Dendritic cell treated with granulocyte-macrophage colony-stimulating factor and Interleukin-4, amounts not matched to agents 40 ng/mL and 50 ng/mL, for 4 days (primary cell): ENCODE measurements at regions of chr5 and their contacts with region 1.

Region 1: DNA sequence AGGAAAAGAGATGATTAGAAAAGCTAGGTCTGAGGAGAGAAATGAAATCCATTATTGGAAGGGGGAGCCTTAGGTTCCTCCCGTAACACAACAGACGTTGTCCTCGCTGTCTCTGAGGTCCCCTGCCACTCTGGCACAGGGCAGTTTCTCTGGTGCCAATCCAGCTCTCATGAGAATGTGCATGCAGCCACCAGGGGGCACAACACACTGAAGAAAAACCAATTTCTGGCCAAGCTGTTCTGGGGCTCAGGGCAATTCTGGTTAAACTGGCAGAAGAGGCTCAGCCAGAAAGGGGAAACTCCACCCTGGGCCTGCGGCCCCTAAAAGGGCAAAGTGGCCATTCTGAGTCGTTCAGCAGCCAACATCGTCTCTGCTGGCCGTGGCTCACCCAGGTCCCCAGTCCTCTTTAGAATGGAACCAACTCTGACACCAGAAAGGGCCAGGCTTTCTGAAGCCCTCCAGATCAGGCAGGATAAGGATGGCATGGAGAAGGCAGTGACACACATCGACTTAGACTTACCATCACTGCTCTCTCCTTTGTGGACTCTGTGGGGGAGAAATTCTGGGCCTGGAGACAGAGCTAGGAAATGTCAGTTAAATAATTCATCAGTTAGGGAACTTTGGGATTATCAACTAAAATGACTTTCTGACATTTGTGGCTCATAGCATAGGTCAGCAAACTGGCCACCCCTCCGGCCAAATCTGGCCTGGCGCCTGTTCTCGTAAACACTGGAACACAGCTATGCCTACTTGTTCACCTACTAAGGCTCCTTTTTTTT is 58.5 kb upstream of the GOLPH3 start:
- H3K4me3 Mint-ChIP-seq: peak overlapping the region; percentile 32
- H3K27ac Mint-ChIP-seq: peak overlapping the region; percentile 82
- H3K4me1 Mint-ChIP-seq: peaks cover 53% of the 10 kb centered on the region
- H3K27me3 Mint-ChIP-seq: no peaks in the 10 kb centered on the region

Region 2: DNA sequence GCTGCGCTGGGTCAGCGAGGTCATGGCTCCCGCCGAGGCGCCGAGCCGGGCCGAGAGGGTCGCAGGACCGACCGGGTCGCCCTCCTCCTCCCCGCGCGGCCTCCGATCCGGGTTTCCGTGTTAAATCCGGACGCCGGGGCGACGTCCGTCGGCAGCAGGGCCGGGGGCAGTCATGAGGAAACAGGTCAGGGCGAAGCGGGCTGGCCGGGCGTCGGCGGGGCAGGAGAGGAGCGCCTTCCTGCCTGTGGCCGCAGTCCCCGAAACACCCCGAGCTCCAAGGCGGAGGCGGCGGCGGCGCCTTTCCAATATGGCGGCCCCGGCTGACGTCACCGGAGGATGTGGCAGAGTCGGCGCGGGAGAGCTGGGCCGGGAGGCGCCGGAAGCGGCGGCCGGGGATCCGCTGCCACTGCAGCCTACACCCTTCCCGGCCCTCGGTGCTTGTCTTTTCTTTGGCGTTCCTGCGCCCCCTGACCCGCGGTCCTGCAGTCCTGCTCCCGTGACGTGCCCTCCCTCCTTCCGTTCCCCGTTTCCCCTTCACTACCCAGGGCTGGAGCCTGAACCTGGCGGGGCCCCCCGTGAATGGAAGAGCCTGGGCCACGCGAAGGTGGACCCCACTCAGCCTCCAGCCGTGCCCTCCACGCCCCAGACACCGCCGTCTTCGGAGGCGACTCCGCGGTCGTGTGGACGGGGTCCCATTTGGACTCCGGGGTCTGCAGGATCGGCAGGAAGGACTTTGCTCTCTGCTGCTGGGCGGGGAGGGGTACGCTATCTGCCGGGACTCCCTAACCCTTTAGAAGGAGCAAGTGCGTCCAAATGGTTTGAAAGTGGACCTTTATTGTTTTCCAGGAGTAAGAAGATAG is 58.4 kb before region 1 on chr5 and contains the start of gene GOLPH3:
- intact Hi-C with region 1: loop called (anchors 5 kb)
- H3K4me3 Mint-ChIP-seq: peak within 1 kb of the TSS; percentile 100
- H3K27ac Mint-ChIP-seq: peak within 1 kb of the TSS; percentile 100
- H3K4me1 Mint-ChIP-seq: peaks cover 39% of the 10 kb centered on the region
- H3K27me3 Mint-ChIP-seq: no peaks in the 10 kb centered on the region

Region 3: DNA sequence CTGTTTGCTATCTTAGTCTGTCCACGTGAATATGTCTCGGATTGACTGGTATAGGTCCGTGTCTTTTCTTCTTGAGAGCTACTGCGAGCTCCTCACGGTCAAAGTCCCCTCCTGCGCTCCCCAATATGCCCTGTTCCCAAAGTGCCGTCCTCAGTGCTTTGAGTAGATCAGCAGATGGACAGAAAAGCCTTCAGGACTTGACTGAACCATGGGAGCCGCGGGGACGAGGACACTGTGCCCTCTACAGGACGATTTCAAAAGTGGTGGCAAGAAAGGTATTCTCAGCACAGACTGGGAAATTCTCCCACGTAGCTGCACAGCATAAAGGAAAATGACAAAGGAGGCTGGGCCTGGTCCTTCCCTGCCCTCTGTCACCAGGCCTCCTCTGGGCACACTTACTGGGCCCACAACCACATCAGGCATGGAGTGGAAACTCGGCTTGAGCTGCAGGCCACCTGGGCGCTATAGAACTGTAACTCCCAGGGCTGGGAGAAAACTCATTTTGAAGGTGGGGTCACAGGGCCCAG is 96.7 kb after region 1 on chr5:
- intact Hi-C with region 1: loop called (anchors 1 kb)
- H3K4me3 Mint-ChIP-seq: no peak overlapping the region
- H3K27ac Mint-ChIP-seq: no peak overlapping the region
- H3K4me1 Mint-ChIP-seq: no peaks in the 10 kb centered on the region
- H3K27me3 Mint-ChIP-seq: no peaks in the 10 kb centered on the region

Region 4: GRCh38 chr5:32600057-32600622 is 367.5 kb after region 1 on chr5:
- intact Hi-C with region 1: loop called (anchors 5 kb)
- H3K4me3 Mint-ChIP-seq: no peak overlapping the region
- H3K27ac Mint-ChIP-seq: no peak overlapping the region
- H3K4me1 Mint-ChIP-seq: peaks cover 33% of the 10 kb centered on the region
- H3K27me3 Mint-ChIP-seq: no peaks in the 10 kb centered on the region

Region 5: GRCh38 chr5:33091571-33092363 is 859.1 kb after region 1 on chr5:
- intact Hi-C with region 1: no loop called
- H3K4me3 Mint-ChIP-seq: no peak overlapping the region
- H3K27ac Mint-ChIP-seq: no peak overlapping the region
- H3K4me1 Mint-ChIP-seq: no peaks in the 10 kb centered on the region
- H3K27me3 Mint-ChIP-seq: no peaks in the 10 kb centered on the region

Region 6: DNA sequence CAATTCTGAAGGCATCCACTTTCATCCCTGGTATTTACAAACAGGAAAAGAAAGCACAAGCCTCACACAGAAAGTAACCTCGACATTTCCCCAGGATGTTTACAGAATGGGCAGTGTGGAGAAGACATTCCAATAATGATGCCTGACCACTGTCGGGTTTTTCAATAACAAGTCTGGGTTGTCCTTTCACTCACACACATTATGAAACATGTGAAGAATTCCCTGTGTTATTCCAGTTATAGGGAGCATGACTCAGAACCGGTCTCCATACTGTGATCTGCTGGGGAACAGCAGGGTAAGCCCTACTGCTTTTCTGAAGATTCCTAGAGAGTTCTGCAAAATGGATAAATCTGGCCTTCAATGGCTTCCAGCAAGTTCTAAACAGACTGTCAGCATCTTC is 1503.9 kb after region 1 on chr5:
- intact Hi-C with region 1: no loop called
- H3K4me3 Mint-ChIP-seq: no peak overlapping the region
- H3K27ac Mint-ChIP-seq: no peak overlapping the region
- H3K4me1 Mint-ChIP-seq: no peaks in the 10 kb centered on the region
- H3K27me3 Mint-ChIP-seq: no peaks in the 10 kb centered on the region